GM12878 (cell line): ENCODE measurements at regions of chr19 and their contacts with region 1.

Region 1: GRCh38 chr19:2328401-2329148 is at the starts of genes LSM7 and SPPL2B:
- DNase-seq: peak; percentile 64
- ATAC-seq: peak; percentile 66
- H3K4me3 ChIP-seq: peak within 1 kb of the TSS; percentile 90
- H3K27ac ChIP-seq: peak within 1 kb of the TSS; percentile 76
- H3K4me1 ChIP-seq: peaks cover 35% of the 10 kb centered on the region
- H3K27me3 ChIP-seq: no peaks in the 10 kb centered on the region
- CTCF ChIP-seq: no peak
- EP300 ChIP-seq: no peak
- POLR2A ChIP-seq: peak; percentile 90
- RAD21 ChIP-seq: no peak
- polyA plus RNA-seq, gene LSM7: 24.4 to 108 TPM
- polyA plus RNA-seq, gene SPPL2B: 0.29 to 0.40 TPM

Region 2: GRCh38 chr19:1825909-1826556 is 502.5 kb before region 1 on chr19:
- CTCF ChIA-PET with region 1: no interaction called
- POLR2A ChIA-PET with region 1: no interaction called
- RAD21 ChIA-PET with region 1: no interaction called
- SMC1A ChIA-PET with region 1: no interaction called
- in situ Hi-C with region 1: no loop called
- intact Hi-C with region 1: no loop called
- DNase-seq: no peak
- ATAC-seq: peak; percentile 96
- H3K4me3 ChIP-seq: no peak overlapping the region
- H3K27ac ChIP-seq: no peak overlapping the region
- H3K4me1 ChIP-seq: no peaks in the 10 kb centered on the region
- H3K27me3 ChIP-seq: no peaks in the 10 kb centered on the region
- CTCF ChIP-seq: peak; percentile 85 to 94 (median 92)
- EP300 ChIP-seq: no peak
- POLR2A ChIP-seq: no peak
- RAD21 ChIP-seq: peak; percentile 62

Region 3: DNA sequence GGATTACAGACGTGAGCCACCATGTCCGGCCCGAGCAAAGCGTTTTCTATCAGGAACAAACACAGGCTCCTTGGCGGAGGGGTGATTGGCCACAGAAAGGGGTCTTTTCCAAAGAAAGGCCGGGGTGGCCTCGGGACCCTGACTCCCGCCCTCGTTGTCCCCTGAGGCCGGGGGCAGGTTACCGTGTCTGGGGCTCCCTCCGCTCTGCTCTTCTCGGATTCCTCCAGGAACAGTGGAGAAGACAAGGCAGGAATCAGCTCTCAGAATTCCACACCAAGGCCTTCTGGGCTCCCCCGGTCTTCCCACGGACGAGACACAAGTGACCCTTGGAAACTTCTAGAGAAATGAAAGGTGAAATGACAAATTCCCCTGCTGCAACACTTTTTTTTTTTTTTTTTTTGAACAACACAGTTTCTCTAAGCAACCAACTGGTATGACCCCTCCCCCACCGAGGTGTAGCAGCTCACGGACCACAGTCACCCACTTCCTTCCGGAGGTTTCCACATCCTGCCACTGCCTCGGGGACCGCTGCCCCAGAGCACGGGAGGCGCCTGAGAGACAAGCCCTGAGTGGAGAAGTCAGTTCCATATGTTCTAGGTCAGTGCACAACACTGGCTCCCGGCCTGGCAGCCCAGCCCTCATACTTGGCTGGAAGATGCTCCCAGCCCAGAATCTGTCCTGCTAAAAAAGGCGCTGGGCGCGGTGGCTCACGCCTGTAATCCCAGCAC is 243.4 kb before region 1 on chr19:
- CTCF ChIA-PET with region 1: no interaction called
- POLR2A ChIA-PET with region 1: no interaction called
- RAD21 ChIA-PET with region 1: no interaction called
- SMC1A ChIA-PET with region 1: no interaction called
- in situ Hi-C with region 1: no loop called
- intact Hi-C with region 1: no loop called
- DNase-seq: peak; percentile 96
- ATAC-seq: peak; percentile 47
- H3K4me3 ChIP-seq: peak overlapping the region; percentile 95
- H3K27ac ChIP-seq: peak overlapping the region; percentile 93
- H3K4me1 ChIP-seq: peaks cover 43% of the 10 kb centered on the region
- H3K27me3 ChIP-seq: no peaks in the 10 kb centered on the region
- CTCF ChIP-seq: no peak
- EP300 ChIP-seq: peak; percentile 92 to 99
- POLR2A ChIP-seq: peak; percentile 93
- RAD21 ChIP-seq: 0 out of 2 replicates have a peak, but pooled peaks have one; percentile 7

Region 4: DNA sequence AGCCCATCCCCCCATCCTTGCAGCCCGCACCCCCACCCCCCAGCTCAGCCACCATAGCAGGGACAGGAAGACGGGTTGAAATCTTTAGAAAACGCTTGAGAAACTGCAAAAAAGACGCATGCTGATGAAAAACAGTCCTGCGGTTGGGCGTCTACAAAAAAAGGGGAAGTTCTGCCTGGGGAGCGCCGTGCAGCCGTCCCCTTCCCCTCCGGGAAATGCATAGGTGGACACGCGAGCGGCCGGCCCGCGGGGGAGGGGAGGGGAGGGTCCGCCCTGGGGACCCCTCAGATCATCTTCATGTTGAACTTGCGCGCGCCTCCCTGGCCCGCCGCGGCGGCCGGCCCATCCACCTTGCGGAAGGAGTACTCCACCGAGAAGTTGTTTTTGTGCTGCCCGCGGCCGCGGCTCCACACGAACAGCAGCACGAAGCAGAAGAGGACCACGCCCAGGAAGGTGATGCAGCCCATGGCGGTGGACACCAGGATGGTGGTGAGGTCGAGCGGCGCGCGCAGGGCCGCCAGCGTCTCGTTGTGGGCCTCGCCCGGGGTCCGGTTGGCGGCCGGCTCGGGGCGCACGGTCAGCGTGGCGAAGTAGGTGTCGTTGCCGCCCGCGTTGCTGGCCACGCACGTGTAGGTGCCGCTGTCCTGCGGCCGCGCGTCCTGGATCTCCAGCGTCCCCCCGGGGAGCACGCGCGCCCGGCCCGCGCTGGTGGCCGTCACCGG is 38.7 kb before region 1 on chr19:
- CTCF ChIA-PET with region 1: interaction called, 5 read pairs
- POLR2A ChIA-PET with region 1: interaction called, 7 read pairs
- RAD21 ChIA-PET with region 1: interaction called, 10 read pairs
- SMC1A ChIA-PET with region 1: interaction called, 6 read pairs
- in situ Hi-C with region 1: no loop called
- intact Hi-C with region 1: loop called (anchors 1 kb)
- DNase-seq: peak; percentile 48
- ATAC-seq: peak; percentile 72
- H3K4me3 ChIP-seq: peak overlapping the region; percentile 65
- H3K27ac ChIP-seq: peak overlapping the region; percentile 74
- H3K4me1 ChIP-seq: peaks cover 30% of the 10 kb centered on the region
- H3K27me3 ChIP-seq: no peaks in the 10 kb centered on the region
- CTCF ChIP-seq: no peak
- EP300 ChIP-seq: peak; percentile 53 to 55; a peak in 2 of 4 replicates
- POLR2A ChIP-seq: no peak; the same call in 1 of the 2 replicates
- RAD21 ChIP-seq: no peak

Region 5: GRCh38 chr19:2315818-2316353 is 12.7 kb before region 1 on chr19:
- CTCF ChIA-PET with region 1: interaction called, 11 read pairs
- POLR2A ChIA-PET with region 1: interaction called, 4 read pairs
- RAD21 ChIA-PET with region 1: no interaction called
- SMC1A ChIA-PET with region 1: interaction called, 5 read pairs
- in situ Hi-C with region 1: no loop called
- intact Hi-C with region 1: no loop called
- DNase-seq: no peak
- ATAC-seq: peak; percentile 90
- H3K4me3 ChIP-seq: no peak overlapping the region
- H3K27ac ChIP-seq: no peak overlapping the region
- H3K4me1 ChIP-seq: peaks cover 3% of the 10 kb centered on the region; the same call in 1 of the 2 replicates
- H3K27me3 ChIP-seq: no peaks in the 10 kb centered on the region
- CTCF ChIP-seq: peak; percentile 43 to 61 (median 53); a peak in 4 of 6 replicates
- EP300 ChIP-seq: no peak
- POLR2A ChIP-seq: no peak
- RAD21 ChIP-seq: peak; percentile 74

Region 6: DNA sequence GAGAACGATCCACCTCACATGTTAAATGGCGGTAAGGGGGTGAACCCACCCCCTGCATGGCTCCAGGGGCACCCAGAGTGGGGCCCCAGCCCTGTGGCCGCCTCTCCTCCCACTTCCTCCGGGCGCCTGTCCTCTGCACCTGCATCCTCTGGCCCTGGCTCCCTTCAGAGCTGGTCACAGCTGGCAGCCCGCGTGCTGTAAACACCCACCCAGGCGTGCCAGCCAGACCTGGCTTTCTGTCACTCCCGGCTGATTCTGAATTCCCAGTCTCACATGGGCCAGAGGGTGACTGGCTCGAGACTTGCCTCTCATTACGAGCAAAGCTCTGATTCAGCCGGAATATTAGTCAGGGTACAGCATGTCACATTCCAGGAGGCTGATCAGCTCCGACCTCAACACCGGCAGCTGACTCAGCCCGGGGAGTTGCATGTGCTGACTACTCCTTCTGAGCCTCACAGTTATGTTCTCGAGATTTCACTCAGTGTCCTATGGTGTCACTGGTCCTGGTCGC is 298.8 kb after region 1 on chr19:
- CTCF ChIA-PET with region 1: no interaction called
- POLR2A ChIA-PET with region 1: no interaction called
- RAD21 ChIA-PET with region 1: no interaction called
- SMC1A ChIA-PET with region 1: no interaction called
- in situ Hi-C with region 1: no loop called
- intact Hi-C with region 1: loop called (anchors 5 kb)
- DNase-seq: no peak
- ATAC-seq: peak; percentile 52
- H3K4me3 ChIP-seq: no peak overlapping the region
- H3K27ac ChIP-seq: peak overlapping the region; percentile 45
- H3K4me1 ChIP-seq: peaks cover 55% of the 10 kb centered on the region
- H3K27me3 ChIP-seq: no peaks in the 10 kb centered on the region
- CTCF ChIP-seq: no peak
- EP300 ChIP-seq: no peak
- POLR2A ChIP-seq: peak; percentile 54; the same call in 1 of the 2 replicates
- RAD21 ChIP-seq: no peak

Region 7: DNA sequence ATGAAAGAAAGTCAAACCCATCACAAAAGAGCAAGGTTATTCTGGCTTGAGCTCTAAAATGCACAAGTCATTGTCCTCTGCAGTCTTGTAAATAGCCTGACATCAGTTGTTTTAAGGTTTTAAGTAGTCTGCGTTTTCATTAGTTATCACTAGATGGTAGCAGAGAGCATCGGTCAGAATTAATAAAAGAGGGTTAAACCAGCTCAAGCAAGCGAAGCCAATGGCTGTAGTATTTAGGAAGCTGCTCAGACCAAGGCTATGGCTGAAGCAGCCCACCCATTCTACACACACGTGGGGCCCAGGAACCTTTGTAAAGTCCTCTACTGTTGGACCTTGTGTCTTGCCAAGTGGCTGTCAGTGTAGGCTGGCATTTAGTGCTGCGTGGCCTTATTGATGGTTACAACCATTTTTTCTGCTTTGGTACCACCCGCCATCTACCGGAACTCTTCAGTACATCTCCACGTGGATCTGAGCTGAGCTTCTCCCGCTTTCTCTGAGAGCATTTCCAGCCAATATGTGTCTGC is 558.9 kb after region 1 on chr19:
- CTCF ChIA-PET with region 1: no interaction called
- POLR2A ChIA-PET with region 1: no interaction called
- RAD21 ChIA-PET with region 1: no interaction called
- SMC1A ChIA-PET with region 1: no interaction called
- in situ Hi-C with region 1: no loop called
- intact Hi-C with region 1: no loop called
- DNase-seq: no peak
- ATAC-seq: peak; percentile 89
- H3K4me3 ChIP-seq: no peak overlapping the region
- H3K27ac ChIP-seq: no peak overlapping the region
- H3K4me1 ChIP-seq: peaks cover 3% of the 10 kb centered on the region; the same call in 1 of the 2 replicates
- H3K27me3 ChIP-seq: no peaks in the 10 kb centered on the region
- CTCF ChIP-seq: peak; percentile 61 to 65 (median 61)
- EP300 ChIP-seq: no peak
- POLR2A ChIP-seq: no peak
- RAD21 ChIP-seq: peak; percentile 60